ENCODE measurements at regions of chr10 and their contacts with region 1.

Region 1: DNA sequence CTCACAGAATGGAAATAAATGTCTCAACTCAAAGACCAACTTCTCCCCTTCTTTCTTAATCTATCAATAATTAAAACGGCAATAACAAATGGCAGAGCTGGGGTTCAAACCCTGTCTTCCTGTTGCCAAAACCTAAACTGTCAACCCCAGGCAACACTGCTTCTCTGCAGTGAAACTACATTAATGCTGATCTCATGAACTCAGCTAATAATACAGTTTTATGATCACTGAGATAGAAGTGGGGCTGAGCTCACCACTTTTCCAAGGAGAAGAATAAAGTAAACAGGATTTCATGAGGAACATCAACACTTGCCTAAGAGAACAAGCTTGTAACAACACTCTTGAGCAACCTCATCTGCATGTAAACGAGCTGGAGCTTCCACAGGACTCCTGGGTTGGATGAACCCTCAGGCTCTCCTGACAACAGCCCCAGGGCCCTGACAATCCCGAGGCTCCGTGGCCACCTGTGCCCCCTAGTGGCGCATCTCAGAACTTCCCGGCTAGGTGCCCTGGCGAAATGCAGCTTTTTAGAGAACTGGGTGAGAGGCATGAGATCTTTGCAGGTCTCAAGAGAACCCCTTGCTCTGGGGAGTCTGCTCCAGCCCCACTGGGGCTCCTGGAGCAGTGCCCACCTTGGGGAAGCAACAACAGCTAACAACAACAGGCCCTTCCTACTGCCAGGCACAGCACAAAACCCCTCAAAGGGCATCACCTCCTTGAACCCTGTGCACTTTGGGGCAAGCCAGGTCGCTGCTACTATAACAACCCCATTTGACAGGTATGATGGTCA is 169.3 kb downstream of the SH3PXD2A start:
- DNase-seq: peak; percentile 32
- ATAC-seq: peak; percentile 93
- H3K4me3 ChIP-seq: no peak overlapping the region
- H3K27ac ChIP-seq: no peak overlapping the region
- H3K4me1 ChIP-seq: peaks cover 11 to 20% of the 10 kb centered on the region in 2 experiments
- H3K27me3 ChIP-seq: no peaks in the 10 kb centered on the region
- CTCF ChIP-seq: peak; percentile 92 to 100 (median 99)
- POLR2A ChIP-seq: no peak
- RAD21 ChIP-seq: peak; percentile 88

Region 2: DNA sequence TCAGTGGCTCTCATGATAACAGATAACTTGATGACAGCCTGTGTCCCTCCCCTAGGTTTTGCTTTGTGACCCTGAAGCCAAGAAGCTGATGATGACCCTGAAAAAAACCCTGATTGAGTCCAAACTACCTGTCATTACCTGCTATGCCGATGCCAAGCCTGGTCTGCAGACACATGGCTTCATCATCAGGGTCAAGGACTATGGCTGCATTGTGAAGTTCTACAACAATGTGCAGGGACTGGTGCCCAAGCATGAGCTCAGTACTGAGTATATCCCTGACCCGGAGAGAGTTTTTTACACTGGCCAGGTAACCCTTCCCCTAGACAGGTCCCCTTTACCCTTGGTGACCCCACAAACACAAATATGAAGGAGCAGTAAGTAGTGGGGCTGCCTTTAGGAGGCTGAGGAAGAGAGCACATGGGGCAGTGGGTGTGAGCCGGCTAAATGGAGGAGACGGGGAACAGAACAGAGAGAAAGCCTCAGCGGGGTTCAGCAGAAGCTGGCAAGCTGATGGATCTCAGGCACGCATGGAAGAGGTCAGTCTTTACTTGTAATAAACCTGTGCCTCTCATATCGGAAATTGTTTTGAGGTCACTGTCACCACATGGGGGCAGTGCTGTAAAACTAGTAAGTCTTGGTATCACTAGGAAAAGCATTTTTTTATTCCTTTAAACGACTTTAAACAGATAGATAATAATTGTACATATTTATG is 269.5 kb before region 1 on chr10:
- CTCF ChIA-PET with region 1: no interaction called
- POLR2A ChIA-PET with region 1: no interaction called
- RAD21 ChIA-PET with region 1: no interaction called
- intact Hi-C with region 1: loop called (anchors 2 kb)
- DNase-seq: peak; percentile 58
- ATAC-seq: peak; percentile 80
- H3K4me3 ChIP-seq: no peak overlapping the region
- H3K27ac ChIP-seq: no peak overlapping the region
- H3K4me1 ChIP-seq: no peaks in the 10 kb centered on the region
- H3K27me3 ChIP-seq: no peaks in the 10 kb centered on the region
- CTCF ChIP-seq: peak; percentile 57 to 93 (median 77)
- POLR2A ChIP-seq: no peak
- RAD21 ChIP-seq: peak; percentile 92

Region 3: GRCh38 chr10:103592186-103593021 is 93.7 kb before region 1 on chr10:
- CTCF ChIA-PET with region 1: interaction called, 13 read pairs
- POLR2A ChIA-PET with region 1: no interaction called
- RAD21 ChIA-PET with region 1: interaction called in 1 of 2 experiments, 4 read pairs
- intact Hi-C with region 1: no loop called
- DNase-seq: peak; percentile 15
- ATAC-seq: peak; percentile 96
- H3K4me3 ChIP-seq: no peak overlapping the region
- H3K27ac ChIP-seq: no peak overlapping the region
- H3K4me1 ChIP-seq: no peaks in the 10 kb centered on the region
- H3K27me3 ChIP-seq: no peaks in the 10 kb centered on the region
- CTCF ChIP-seq: peak; percentile 60 to 96 (median 95)
- POLR2A ChIP-seq: no peak
- RAD21 ChIP-seq: peak; percentile 86

Region 4: GRCh38 chr10:103598654-103599115 is 87.4 kb before region 1 on chr10:
- CTCF ChIA-PET with region 1: interaction called, 41 read pairs
- POLR2A ChIA-PET with region 1: no interaction called
- RAD21 ChIA-PET with region 1: interaction called, 5 to 7 read pairs
- intact Hi-C with region 1: loop called (anchors 1 kb)
- DNase-seq: peak; percentile 66
- ATAC-seq: peak; percentile 97
- H3K4me3 ChIP-seq: no peak overlapping the region
- H3K27ac ChIP-seq: no peak overlapping the region
- H3K4me1 ChIP-seq: peaks cover 0 to 5% of the 10 kb centered on the region in 2 experiments; a peak in 2 of 4 replicates
- H3K27me3 ChIP-seq: no peaks in the 10 kb centered on the region
- CTCF ChIP-seq: peak; percentile 93 to 98 (median 95)
- POLR2A ChIP-seq: no peak
- RAD21 ChIP-seq: peak; percentile 98

Region 5: DNA sequence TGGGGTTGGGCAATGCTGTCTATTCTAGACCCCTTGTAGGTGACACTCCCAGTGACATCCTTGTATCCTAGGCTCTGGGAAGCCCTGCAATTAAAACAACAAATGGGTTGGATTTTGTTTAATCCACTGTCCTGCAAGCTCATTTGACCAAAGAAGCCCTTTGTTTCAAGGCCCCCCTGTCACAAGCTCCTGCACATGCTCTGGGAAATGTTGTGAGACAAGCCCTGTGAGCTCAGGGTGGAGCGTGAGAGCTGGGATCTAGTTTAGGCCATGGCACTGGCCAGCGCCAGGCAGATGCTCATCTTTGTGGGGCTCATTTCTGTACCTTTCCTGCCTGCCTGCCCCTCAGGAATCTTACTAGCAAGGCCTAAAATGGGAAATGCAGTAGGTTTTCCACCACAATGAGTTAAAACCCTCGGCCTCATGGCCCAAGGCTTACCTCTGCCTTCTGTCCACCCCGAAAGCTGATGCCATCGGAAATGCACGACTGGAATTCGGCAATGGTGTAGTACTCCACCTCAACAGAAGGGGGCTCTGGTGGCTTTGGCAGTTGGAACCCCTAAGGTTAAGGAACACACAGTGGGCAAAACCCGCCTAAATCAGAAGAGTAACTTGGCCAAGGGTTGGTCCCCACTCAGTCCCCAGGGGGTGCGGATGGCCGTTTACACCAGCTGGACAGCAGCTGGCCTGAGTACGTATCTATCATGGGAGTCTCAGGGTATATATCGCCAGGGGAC is 80.5 kb before region 1 on chr10:
- CTCF ChIA-PET with region 1: interaction called, 41 read pairs
- POLR2A ChIA-PET with region 1: no interaction called
- RAD21 ChIA-PET with region 1: interaction called in 1 of 2 experiments, 3 read pairs
- intact Hi-C with region 1: no loop called
- DNase-seq: peak; percentile 28
- ATAC-seq: peak; percentile 84
- H3K4me3 ChIP-seq: no peak overlapping the region
- H3K27ac ChIP-seq: no peak overlapping the region
- H3K4me1 ChIP-seq: no peaks in the 10 kb centered on the region
- H3K27me3 ChIP-seq: no peaks in the 10 kb centered on the region
- CTCF ChIP-seq: peak; percentile 67 to 93 (median 92); a peak in 5 of 6 replicates
- POLR2A ChIP-seq: no peak
- RAD21 ChIP-seq: peak; percentile 77

Region 6: DNA sequence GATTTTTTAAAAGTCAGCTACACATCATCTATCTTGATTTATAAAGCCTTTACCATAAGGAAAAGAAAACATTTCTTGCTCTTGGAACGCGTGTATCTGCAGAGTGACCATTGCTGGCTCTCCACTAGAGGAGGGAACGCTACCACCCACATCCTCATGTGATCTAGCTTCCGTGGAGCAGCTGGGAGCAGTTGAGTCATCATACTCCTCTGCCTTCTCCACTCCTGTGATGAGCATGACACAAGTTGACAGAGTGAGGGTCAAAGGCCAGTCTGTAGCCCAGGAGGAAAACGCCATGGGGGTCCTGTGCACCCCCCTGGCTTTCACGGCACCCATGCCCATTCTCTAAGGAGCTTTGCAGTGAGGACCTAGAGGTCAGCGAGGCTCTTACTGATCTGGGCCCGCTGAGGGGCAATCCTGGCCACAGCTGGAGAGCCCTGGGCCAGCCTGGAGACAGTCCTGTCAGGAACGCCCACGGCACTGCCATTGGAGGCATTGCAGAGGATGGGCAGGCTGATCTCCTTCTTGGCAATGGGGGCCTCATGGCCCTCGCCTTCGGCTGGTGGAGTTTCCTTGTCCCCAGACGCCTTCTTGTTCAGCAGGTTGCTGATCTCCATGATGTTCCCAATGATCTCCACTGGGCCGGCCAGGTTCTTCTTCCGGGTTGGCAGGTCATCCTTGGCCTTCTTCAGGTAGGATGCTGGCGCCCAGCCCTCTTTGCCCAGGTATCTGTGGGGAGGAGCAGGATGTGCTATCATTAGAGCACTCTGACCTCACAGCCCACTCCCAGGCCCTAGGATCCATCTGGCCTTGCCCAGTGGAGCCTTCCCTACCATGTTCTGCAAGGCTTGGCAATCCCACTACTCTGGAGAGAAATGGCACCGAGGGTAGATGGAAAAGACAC is 73.4 kb before region 1 on chr10:
- CTCF ChIA-PET with region 1: interaction called, 13 read pairs
- POLR2A ChIA-PET with region 1: no interaction called
- RAD21 ChIA-PET with region 1: no interaction called
- intact Hi-C with region 1: no loop called
- DNase-seq: no peak
- ATAC-seq: 0 out of 2 replicates have a peak, but pooled peaks have one; percentile 44
- H3K4me3 ChIP-seq: no peak overlapping the region
- H3K27ac ChIP-seq: no peak overlapping the region
- H3K4me1 ChIP-seq: peaks cover 0 to 5% of the 10 kb centered on the region in 2 experiments; a peak in 1 of 4 replicates
- H3K27me3 ChIP-seq: no peaks in the 10 kb centered on the region
- CTCF ChIP-seq: no peak
- POLR2A ChIP-seq: no peak
- RAD21 ChIP-seq: no peak

Region 7: GRCh38 chr10:103696411-103697145 is 10.5 kb after region 1 on chr10:
- CTCF ChIA-PET with region 1: interaction called, 10 read pairs
- POLR2A ChIA-PET with region 1: interaction called, 6 read pairs
- RAD21 ChIA-PET with region 1: interaction called, 3 to 4 read pairs
- intact Hi-C with region 1: no loop called
- DNase-seq: peak; percentile 83
- ATAC-seq: peak; percentile 78
- H3K4me3 ChIP-seq: peak overlapping the region; percentile 14 to 38
- H3K27ac ChIP-seq: peak overlapping the region; percentile 30
- H3K4me1 ChIP-seq: peaks cover 37 to 47% of the 10 kb centered on the region in 2 experiments
- H3K27me3 ChIP-seq: no peaks in the 10 kb centered on the region; the same call in 1 of the 2 replicates
- CTCF ChIP-seq: peak in 2 of 3 experiments; percentile 64 to 79; a peak in 4 of 6 replicates
- POLR2A ChIP-seq: peak; percentile 69
- RAD21 ChIP-seq: no peak

Measured in HCT116 (cell line).